Mucosa of descending colon (tissue), 3 donors: ENCODE measurements at regions of chr6 and their contacts with region 1.

Region 1: DNA sequence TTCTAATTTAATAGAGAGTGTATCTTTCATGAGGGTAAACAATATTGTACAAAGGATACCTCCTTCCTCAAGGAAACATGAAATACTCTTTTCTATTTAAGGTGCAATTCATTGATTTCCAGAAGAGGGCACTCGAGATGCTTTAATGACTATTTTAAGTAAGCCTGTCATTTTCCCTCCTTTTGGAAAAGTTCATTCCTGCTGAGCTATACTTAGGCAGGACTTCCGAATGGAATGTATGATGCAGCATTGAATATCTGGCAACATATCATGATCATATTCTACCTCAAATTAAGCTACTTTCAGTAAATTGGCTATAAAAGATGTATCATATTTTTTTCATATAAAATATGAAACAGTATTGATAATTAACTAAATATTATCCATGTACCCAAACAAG is 5.0 kb downstream of the DST start:
- DNase-seq: peak in 1 of 3 donors; percentile 53
- ATAC-seq: peak; percentile 65
- H3K4me3 ChIP-seq: no peak overlapping the region
- H3K4me1 ChIP-seq: no peaks in the 10 kb centered on the region
- CTCF ChIP-seq: peak; percentile 61

Region 2: DNA sequence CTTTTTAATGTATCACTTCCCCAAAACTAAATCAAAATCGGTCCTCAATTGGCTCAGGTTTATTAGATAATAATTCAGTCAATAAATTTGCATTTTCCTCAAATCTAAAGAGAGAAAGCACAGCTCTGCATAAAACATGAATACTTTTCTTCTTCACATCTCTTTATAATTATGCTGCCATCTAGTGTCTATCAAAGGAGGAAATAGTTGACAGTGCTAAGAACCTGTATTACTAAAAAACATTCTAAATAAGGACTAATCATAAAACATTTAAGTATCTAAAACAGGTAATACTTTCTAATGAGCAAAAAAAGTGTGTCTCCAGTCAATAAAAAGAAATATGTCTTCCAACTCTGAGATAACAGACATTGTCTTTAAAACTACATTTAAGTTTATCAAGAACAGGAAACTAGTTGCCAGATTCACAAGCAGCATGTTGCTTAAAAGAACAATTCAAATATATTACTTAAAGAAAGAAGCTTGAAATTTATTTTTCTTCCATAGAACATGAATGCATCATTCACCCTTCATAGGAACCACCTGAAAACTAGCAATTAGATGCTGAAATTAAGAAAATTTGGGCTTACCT is 61.5 kb after region 1 on chr6:
- intact Hi-C with region 1: loop called (anchors 5 kb)
- DNase-seq: no peak
- ATAC-seq: peak; percentile 67
- H3K4me3 ChIP-seq: no peak overlapping the region
- H3K4me1 ChIP-seq: peaks cover 7% of the 10 kb centered on the region
- CTCF ChIP-seq: no peak

Region 3: DNA sequence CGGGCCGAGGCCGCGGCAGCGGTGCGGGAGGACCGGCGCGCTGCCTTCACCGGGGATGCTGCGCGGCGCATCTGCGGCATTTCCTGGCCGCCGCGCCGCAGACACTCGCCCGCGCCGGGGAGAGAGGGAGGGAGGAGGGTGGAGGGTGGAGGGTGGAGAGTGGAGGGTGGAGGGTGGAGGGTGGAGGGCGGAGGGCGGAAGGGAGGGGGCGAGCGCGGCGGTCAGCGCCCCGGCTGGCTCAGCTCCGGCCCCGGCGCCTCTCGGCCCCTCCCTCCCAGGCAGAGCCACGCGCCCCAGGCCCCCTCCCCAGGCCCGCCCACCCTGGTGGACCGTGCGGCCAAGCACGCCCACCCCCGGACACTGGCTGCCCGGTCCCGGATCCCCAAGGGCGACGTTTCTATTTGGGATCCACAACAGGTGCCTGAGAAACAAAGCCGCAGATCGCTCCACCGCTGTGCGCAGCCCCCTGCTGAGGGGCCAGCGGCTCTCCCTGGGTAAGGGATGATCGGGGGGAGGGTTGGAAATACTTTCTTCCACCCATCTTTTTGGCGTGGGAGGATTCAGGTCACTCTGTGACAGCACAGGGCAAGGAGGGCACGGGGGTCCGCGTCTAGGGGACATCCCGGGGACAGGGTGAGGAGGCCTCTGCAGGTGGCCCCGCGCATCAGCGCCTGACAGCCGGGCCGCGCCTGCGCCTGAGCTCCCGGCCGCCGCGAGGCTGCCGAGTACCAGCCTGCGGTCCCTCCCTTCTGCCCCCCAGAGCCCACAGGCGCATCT is 206.1 kb after region 1 on chr6:
- intact Hi-C with region 1: loop called in 1 of 2 experiments (anchors 10 kb)
- DNase-seq: peak; percentile 58 to 71 (median 70)
- ATAC-seq: peak; percentile 87
- H3K4me3 ChIP-seq: peak overlapping the region; percentile 7
- H3K4me1 ChIP-seq: no peaks in the 10 kb centered on the region
- CTCF ChIP-seq: peak; percentile 25

Region 4: DNA sequence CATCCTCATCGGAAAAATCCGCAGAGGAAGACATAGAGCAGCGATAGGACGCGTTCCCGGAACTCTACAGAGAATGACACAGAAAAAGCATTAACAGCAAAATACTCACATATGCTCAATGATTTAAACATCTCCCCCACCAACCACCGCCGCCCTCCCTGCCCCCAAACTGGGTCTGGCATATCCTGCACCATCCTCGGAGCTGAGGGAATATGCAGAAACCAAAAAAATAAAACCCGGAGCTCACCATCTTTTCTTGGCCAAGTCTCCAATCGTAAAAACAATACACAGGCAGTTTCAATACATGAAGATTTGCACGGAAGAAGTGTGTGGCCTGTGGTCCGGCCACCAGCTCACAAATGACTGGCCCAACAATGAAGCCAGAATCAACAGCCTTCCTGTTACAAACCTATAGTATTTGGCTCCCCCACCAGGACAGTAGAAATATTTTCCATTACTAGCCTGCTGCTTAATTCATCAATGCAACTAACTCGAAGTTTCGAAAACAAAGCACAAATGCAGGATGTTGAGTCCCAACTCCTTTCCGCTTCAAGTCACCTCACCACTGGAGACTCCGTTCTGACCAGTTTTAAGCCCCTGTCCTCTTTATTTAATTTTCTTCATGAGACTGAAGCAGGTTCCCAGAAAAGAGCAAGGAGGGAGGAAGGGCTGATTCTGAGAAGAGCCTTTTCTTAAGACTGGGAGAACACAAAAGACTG is 214.1 kb after region 1 on chr6:
- intact Hi-C with region 1: loop called (anchors 5 to 10 kb)
- DNase-seq: peak in 1 of 3 donors; percentile 37
- ATAC-seq: peak; percentile 72
- H3K4me3 ChIP-seq: no peak overlapping the region
- H3K4me1 ChIP-seq: no peaks in the 10 kb centered on the region
- CTCF ChIP-seq: peak; percentile 17